T-cell (primary cell): ENCODE measurements at regions of chr2 and their contacts with region 1.

Region 1: GRCh38 chr2:203379156-203379555 is 51.0 kb downstream of the ABI2 start:
- DNase-seq: no peak
- ATAC-seq: no peak
- H3K4me3 ChIP-seq: no peak overlapping the region
- H3K4me3 Mint-ChIP-seq: no peak overlapping the region
- H3K27ac ChIP-seq: no peak overlapping the region
- H3K27ac Mint-ChIP-seq: no peak overlapping the region
- H3K4me1 ChIP-seq: no peaks in the 10 kb centered on the region
- H3K4me1 Mint-ChIP-seq: peaks cover 0 to 6% (median 5%) of the 10 kb centered on the region in 3 donors
- H3K27me3 ChIP-seq: no peaks in the 10 kb centered on the region
- H3K27me3 Mint-ChIP-seq: no peaks in the 10 kb centered on the region

Region 2: GRCh38 chr2:202858575-202858974 is 520.6 kb before region 1 on chr2:
- CTCF ChIA-PET with region 1: no interaction called
- POLR2A ChIA-PET with region 1: interaction called in 1 of 2 experiments, 14 read pairs
- DNase-seq: no peak
- ATAC-seq: no peak
- H3K4me3 ChIP-seq: no peak overlapping the region
- H3K4me3 Mint-ChIP-seq: no peak overlapping the region
- H3K27ac ChIP-seq: no peak overlapping the region
- H3K27ac Mint-ChIP-seq: no peak overlapping the region
- H3K4me1 ChIP-seq: no peaks in the 10 kb centered on the region
- H3K4me1 Mint-ChIP-seq: no peaks in the 10 kb centered on the region
- H3K27me3 ChIP-seq: no peaks in the 10 kb centered on the region
- H3K27me3 Mint-ChIP-seq: no peaks in the 10 kb centered on the region

Region 3: GRCh38 chr2:203280428-203281064 is 98.6 kb before region 1 on chr2:
- CTCF ChIA-PET with region 1: no interaction called
- POLR2A ChIA-PET with region 1: no interaction called
- DNase-seq: no peak
- ATAC-seq: no peak
- H3K4me3 ChIP-seq: no peak overlapping the region
- H3K4me3 Mint-ChIP-seq: no peak overlapping the region
- H3K27ac ChIP-seq: no peak overlapping the region
- H3K27ac Mint-ChIP-seq: no peak overlapping the region
- H3K4me1 ChIP-seq: no peaks in the 10 kb centered on the region
- H3K4me1 Mint-ChIP-seq: no peaks in the 10 kb centered on the region
- H3K27me3 ChIP-seq: no peaks in the 10 kb centered on the region
- H3K27me3 Mint-ChIP-seq: no peaks in the 10 kb centered on the region

Region 4: GRCh38 chr2:203740780-203741281 is 361.7 kb after region 1 on chr2:
- CTCF ChIA-PET with region 1: no interaction called
- POLR2A ChIA-PET with region 1: no interaction called
- DNase-seq: peak in 25 of 35 experiments; percentile 21 to 85 (median 54)
- ATAC-seq: peak; percentile 86 to 90 (median 88)
- H3K4me3 ChIP-seq: peak overlapping the region in 1 of 2 donors; percentile 38
- H3K4me3 Mint-ChIP-seq: peak overlapping the region; percentile 59 to 69 (median 63)
- H3K27ac ChIP-seq: peak overlapping the region; percentile 79
- H3K27ac Mint-ChIP-seq: peak overlapping the region; percentile 90 to 91
- H3K4me1 ChIP-seq: peaks cover 62 to 74% of the 10 kb centered on the region in 2 experiments
- H3K4me1 Mint-ChIP-seq: peaks cover 85 to 91% (median 88%) of the 10 kb centered on the region in 3 donors
- H3K27me3 ChIP-seq: no peaks in the 10 kb centered on the region
- H3K27me3 Mint-ChIP-seq: no peaks in the 10 kb centered on the region